Endothelial cell of umbilical vein (primary cell): ENCODE measurements at regions of chr13 and their contacts with region 1.

Region 1: DNA sequence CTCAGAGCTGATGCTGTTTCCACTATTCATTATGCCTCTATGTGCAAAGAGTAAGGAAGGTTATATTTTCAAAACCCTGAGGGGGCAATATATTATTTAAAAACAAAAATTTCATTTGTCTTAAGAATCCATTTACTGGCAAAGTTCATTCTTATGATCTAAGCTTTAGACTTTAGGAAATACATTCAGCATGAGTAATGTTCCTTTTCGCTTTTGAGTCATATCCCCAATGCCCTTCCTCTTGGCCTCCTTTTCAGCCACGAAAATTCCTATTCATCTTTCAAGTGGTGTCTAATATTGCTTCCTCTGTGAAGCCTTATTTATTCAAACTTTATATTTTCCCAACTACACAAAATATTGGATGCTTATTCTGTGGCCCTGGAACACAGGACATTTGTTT is 1317.0 kb downstream of the PCDH9 start:
- DNase-seq: peak; percentile 94
- H3K4me3 ChIP-seq: peak overlapping the region in 1 of 3 experiments; percentile 31
- H3K27ac ChIP-seq: peak overlapping the region; percentile 99
- H3K4me1 ChIP-seq: peaks cover 38% of the 10 kb centered on the region
- H3K27me3 ChIP-seq: no peaks in the 10 kb centered on the region
- CTCF ChIP-seq: no peak
- POLR2A ChIP-seq: peak; percentile 54

Region 2: GRCh38 chr13:64239372-64239771 is 1673.8 kb before region 1 on chr13:
- CTCF ChIA-PET with region 1: no interaction called
- POLR2A ChIA-PET with region 1: no interaction called
- dilution Hi-C with region 1: no loop called
- intact Hi-C with region 1: loop called (anchors 5 kb)
- DNase-seq: peak; percentile 64
- H3K4me3 ChIP-seq: no peak overlapping the region
- H3K27ac ChIP-seq: peak overlapping the region; percentile 48
- H3K4me1 ChIP-seq: peaks cover 16% of the 10 kb centered on the region
- H3K27me3 ChIP-seq: no peaks in the 10 kb centered on the region
- CTCF ChIP-seq: no peak
- POLR2A ChIP-seq: no peak

Region 3: GRCh38 chr13:65597839-65598818 is 315.0 kb before region 1 on chr13:
- CTCF ChIA-PET with region 1: no interaction called
- POLR2A ChIA-PET with region 1: no interaction called
- dilution Hi-C with region 1: no loop called
- intact Hi-C with region 1: no loop called
- DNase-seq: no peak
- H3K4me3 ChIP-seq: no peak overlapping the region
- H3K27ac ChIP-seq: no peak overlapping the region
- H3K4me1 ChIP-seq: no peaks in the 10 kb centered on the region
- H3K27me3 ChIP-seq: no peaks in the 10 kb centered on the region
- CTCF ChIP-seq: no peak
- POLR2A ChIP-seq: no peak

Region 4: DNA sequence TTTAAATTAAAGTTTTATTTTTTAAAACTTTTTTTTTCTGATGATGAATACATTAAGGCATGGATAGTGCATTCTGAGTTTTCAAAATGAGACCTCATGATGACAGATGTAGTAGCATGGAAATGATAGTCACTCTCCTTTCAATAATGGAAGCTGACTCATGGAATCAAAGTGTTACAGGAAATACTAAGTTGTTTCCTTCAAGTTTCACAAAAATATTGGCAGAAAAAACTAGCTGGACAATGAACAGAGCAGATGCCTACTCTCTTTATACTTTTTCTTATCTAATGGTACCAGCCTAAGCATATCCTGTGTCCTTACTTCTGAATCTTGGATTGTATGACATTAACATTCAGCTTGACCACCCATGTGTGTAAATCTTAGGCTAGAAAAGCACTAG is 20.3 kb before region 1 on chr13:
- CTCF ChIA-PET with region 1: interaction called, 8 read pairs
- POLR2A ChIA-PET with region 1: interaction called, 11 read pairs
- dilution Hi-C with region 1: no loop called
- intact Hi-C with region 1: loop called (anchors 1 kb)
- DNase-seq: peak; percentile 86
- H3K4me3 ChIP-seq: no peak overlapping the region
- H3K27ac ChIP-seq: peak overlapping the region; percentile 82
- H3K4me1 ChIP-seq: peaks cover 32% of the 10 kb centered on the region
- H3K27me3 ChIP-seq: no peaks in the 10 kb centered on the region
- CTCF ChIP-seq: no peak
- POLR2A ChIP-seq: no peak

Region 5: DNA sequence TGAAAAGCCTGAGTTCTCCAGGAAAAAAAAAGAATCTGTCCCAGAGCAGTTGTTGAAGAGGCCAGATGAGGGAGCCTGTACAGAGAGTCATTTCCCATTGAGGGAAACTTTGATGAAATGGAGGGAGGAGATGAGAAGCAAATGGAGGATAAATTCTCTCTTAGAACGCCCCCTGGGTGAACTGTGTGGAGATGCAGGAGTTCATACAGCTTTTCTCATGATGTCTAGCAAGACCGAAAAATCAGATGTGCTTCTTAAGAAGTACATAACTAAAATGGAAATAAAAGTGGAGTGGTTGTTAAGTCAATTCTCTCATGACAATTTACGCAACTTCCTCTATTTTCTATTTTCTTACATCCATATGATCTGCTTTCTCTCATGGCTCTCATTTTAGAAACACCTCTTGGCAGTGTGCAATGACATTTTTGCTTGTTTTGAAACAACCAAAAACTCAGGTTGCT is 53.8 kb after region 1 on chr13:
- CTCF ChIA-PET with region 1: no interaction called
- POLR2A ChIA-PET with region 1: no interaction called
- dilution Hi-C with region 1: no loop called
- intact Hi-C with region 1: loop called (anchors 2 kb)
- DNase-seq: peak; percentile 36
- H3K4me3 ChIP-seq: no peak overlapping the region
- H3K27ac ChIP-seq: no peak overlapping the region
- H3K4me1 ChIP-seq: no peaks in the 10 kb centered on the region
- H3K27me3 ChIP-seq: no peaks in the 10 kb centered on the region
- CTCF ChIP-seq: peak; percentile 18 to 27
- POLR2A ChIP-seq: no peak

Region 6: DNA sequence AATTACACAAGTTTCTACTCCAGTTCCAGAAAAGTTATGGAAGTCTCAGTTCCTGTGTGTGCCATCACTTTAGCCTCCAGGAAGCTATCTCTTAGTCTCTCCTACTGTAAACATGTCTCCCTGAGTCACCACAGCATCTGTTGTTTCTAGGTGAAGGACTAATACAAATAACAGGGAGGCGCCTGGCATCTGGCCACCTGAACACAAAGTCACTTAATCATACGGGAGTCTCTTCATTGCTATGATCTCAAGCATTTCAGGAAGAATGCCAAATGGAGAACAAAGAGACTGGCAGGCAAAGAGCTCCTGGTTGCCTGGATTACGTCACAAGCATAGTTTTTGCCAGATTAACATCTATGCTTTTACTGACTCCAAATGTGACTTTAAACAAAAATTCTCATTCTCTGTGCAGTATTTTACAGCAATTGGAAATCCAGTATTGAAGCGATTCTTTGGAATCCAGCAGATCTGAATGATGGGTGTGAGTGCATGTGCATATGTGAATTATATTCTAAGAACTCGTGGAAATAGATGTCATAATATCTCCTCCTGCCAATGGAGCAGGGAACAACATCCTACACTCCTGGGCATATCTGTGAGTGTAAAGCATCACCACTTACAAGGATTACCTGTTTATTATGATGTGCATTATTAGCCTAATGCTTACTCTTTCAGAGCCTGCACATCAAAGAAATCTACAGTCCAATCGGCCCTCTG is 744.1 kb after region 1 on chr13:
- CTCF ChIA-PET with region 1: no interaction called
- POLR2A ChIA-PET with region 1: no interaction called
- dilution Hi-C with region 1: no loop called
- intact Hi-C with region 1: loop called (anchors 10 kb)
- DNase-seq: peak; percentile 97
- H3K4me3 ChIP-seq: no peak overlapping the region
- H3K27ac ChIP-seq: peak overlapping the region; percentile 92
- H3K4me1 ChIP-seq: peaks cover 32% of the 10 kb centered on the region
- H3K27me3 ChIP-seq: no peaks in the 10 kb centered on the region
- CTCF ChIP-seq: no peak
- POLR2A ChIP-seq: peak; percentile 31

Region 7: DNA sequence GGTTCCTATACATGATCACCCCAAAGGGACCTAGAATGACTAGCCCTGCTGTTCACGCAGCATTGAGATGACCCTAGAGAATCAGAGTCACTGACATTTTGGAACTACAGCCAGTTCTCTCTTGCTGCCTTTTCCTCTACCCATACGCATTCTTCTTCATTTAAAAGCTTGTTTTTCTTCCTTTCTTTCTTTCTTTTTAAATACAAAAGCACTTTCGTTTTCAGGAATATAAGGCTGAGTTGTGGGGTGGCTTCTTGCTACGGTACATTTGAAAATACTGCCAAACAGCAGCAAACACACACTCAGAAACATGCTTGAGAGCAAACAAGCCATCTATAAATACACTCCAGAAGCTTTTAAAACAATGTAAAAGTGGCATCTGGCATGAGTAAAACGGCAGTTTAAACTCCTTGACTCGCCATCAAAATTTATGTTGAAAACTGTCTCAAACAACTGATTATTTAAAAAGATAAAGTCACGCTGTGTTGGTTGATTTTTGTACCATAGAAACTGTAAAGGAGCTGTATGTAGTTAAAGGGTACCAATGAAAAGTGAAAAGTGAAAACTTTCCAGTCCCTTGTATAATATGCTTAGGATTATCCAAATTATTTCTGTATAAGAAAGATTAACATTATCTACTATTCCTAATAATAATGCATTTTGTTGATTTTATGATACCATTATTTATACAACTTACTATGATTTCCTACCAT is 1221.4 kb after region 1 on chr13:
- CTCF ChIA-PET with region 1: no interaction called
- POLR2A ChIA-PET with region 1: no interaction called
- dilution Hi-C with region 1: no loop called
- intact Hi-C with region 1: no loop called
- DNase-seq: peak; percentile 59
- H3K4me3 ChIP-seq: peak overlapping the region in 2 of 3 experiments; percentile 18 to 73
- H3K27ac ChIP-seq: peak overlapping the region; percentile 35
- H3K4me1 ChIP-seq: peaks cover 16% of the 10 kb centered on the region
- H3K27me3 ChIP-seq: no peaks in the 10 kb centered on the region
- CTCF ChIP-seq: no peak
- POLR2A ChIP-seq: no peak